AG04449 (cell line): ENCODE measurements at regions of chr17 and their contacts with region 1.

Region 1: DNA sequence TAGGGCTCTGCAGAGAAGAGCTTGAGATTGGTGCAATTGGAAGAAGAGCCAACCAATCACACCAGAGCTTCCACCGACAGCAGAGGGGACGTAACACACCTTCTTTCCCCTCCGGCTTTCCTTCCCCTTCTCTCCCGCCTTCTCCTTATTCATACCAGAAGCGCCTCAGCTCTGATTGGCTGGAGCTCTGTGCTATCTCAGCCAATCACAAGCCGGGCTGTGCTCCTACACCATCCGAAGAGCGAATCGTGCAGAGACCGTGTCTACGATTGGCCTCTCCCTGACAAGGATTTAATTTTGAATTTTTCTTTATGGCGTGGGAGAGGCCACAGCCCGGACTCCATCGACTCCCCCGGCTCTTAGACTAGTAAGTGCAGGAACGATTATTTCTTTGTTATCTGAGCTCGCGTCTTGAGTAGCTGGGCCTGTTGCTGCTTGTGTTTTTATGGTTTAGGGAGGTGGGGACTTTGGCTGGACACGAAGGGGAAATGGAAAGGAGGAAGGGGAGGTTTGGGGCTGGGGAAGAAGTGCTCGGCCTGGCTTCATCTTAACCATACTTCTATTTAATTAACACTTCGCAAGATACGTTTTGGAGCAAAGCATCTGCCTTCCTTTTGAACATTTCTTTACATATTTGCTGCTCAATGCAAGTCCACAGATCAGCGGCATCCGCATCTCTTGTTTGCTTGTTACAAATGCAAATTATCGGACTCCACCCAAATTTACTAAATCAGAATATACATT is at the start of gene PRR11:
- DNase-seq: peak; percentile 100
- H3K4me3 ChIP-seq: peak within 1 kb of the TSS; percentile 88
- CTCF ChIP-seq: no peak

Region 2: DNA sequence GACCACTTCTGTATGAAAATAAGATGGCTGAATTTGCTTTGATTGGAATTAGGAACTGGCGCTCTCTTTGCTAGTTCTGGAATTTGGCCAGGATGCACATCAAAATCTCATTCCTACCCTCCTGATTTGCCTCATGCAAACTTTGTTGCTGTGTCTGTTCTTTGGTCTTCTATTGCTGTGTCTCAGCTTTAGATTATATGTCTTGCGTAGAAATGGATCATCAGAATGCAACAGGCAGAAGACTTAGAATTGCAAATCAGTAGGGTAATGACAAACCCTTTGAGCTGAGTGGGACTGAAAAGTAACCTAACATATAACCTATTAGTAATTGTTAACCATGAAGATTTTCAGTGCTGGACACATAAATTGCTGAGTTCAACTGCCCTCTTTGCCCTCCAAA is 432.9 kb before region 1 on chr17:
- CTCF ChIA-PET with region 1: no interaction called
- POLR2A ChIA-PET with region 1: no interaction called
- DNase-seq: no peak
- H3K4me3 ChIP-seq: no peak overlapping the region
- CTCF ChIP-seq: no peak

Region 3: GRCh38 chr17:59165902-59166342 is 10.3 kb after region 1 on chr17:
- CTCF ChIA-PET with region 1: interaction called, 19 read pairs
- POLR2A ChIA-PET with region 1: no interaction called
- DNase-seq: peak; percentile 17
- H3K4me3 ChIP-seq: no peak overlapping the region
- CTCF ChIP-seq: peak; percentile 57